ENCODE measurements at regions of chr15 and their contacts with region 1.

Region 1: DNA sequence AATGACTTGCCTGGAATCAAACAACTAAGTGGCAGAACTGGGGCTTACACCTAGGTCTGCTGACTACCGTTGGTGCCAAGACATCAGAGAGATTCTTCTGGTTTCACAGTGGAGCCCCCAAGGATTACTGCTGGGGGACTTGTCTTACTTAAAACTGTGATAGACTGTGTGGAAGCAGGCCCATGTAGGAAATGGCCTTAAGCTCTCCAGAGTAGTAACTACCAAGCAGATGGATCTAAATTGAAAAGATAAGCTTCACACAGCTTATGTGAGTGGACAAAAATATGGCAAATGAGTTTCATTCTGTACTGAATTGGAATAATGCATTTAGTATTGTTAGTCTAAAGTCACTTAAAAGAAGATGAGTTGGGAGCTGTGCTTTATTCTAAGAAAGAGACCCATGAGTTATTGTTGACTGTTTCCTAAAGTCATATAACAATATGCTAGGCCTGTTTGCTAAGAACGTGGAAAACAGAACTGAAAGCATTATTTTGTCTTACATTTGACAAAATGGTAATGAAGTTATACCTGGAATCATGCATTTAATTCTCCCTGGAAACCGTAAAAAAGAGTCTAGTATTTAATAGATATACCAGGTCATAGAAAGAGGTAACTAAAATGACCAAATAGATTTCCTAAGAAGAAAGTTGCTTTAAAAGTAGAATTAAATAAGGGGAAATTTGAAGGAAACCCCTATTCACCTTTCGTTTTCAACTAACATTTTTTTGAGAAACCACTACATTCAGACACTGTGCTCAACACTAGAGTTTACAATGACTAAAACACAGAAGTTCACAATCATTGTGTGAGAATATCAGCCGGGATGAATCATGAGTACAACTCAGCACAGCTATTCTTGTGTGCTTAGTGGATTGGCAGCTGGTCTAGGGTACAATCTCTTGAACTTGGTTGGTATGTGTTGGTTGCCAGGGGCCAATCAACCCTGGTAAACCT is 13.0 kb upstream of the MAPK6 start:
- DNase-seq: no peak
- H3K4me3 Mint-ChIP-seq: peak overlapping the region; percentile 28
- H3K27ac Mint-ChIP-seq: peak overlapping the region; percentile 80
- H3K4me1 Mint-ChIP-seq: peaks cover 70% of the 10 kb centered on the region
- H3K27me3 Mint-ChIP-seq: no peaks in the 10 kb centered on the region

Region 2: DNA sequence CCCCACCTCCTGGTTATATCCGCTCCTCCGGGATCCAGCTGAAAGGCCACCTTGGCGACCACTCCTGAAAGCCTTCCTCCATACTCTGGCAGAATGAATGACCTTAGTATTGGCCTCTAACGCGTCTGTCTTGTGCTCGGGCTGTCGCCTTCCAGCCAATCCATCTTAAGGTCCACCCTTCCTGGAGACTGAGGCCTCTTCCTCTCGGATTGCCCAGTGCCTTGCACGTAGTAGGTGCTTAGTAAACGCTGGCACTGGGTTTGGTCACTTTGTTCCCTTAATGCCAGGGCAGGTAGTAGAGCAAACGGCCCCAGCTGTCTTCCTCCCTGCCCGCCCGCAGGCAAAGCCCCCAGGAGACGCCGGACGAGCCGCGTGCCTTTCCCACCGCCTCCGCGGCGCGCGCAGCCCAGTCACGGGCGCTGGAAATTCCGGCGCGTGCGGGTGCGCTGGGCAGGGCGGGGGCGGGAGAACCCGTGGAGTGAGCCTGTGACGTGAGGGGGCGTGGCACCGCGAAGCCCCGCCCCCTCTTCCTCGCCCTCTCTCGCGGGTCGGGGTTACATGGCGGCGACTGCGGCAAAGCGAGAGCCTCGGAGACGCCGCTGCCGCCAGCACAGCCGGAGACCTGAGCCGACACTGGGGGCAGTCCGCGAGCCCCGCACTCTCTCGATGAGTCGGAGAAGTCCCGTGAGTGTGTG is 12.8 kb after region 1 on chr15 and contains the start of gene MAPK6:
- intact Hi-C with region 1: loop called (anchors 1 kb)
- DNase-seq: peak; percentile 91
- H3K4me3 Mint-ChIP-seq: peak within 1 kb of the TSS; percentile 98
- H3K27ac Mint-ChIP-seq: peak within 1 kb of the TSS; percentile 99
- H3K4me1 Mint-ChIP-seq: peaks cover 46% of the 10 kb centered on the region
- H3K27me3 Mint-ChIP-seq: peaks cover 7% of the 10 kb centered on the region
- total RNA-seq, gene MAPK6: 57.3 and 57.9 TPM in 2 replicates

Region 3: DNA sequence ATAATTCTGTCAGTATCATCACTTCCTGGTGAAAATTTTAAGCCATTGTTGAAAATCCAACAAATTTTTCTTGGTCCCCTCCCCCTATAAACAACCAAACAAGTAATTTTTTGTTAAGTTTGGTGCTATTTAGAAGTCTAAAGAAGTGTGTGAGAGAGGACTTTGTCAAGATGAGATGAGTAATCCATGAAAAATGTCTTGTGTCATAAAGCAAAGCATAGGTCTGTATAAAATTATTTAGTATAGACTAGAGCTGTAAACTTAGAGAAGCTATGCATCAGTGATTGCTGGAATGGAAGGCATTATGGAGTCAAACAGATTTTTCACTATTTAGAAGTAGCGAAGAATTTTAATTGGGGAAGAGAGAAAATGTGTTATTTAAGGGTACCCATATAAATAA is 44.4 kb after region 1 on chr15:
- intact Hi-C with region 1: loop called (anchors 1 kb)
- DNase-seq: no peak
- H3K4me3 Mint-ChIP-seq: no peak overlapping the region
- H3K27ac Mint-ChIP-seq: no peak overlapping the region
- H3K4me1 Mint-ChIP-seq: peaks cover 16% of the 10 kb centered on the region
- H3K27me3 Mint-ChIP-seq: no peaks in the 10 kb centered on the region

Region 4: GRCh38 chr15:52179278-52180195 is 173.5 kb after region 1 on chr15:
- intact Hi-C with region 1: loop called (anchors 5 kb)
- DNase-seq: peak; percentile 87
- H3K4me3 Mint-ChIP-seq: peak overlapping the region; percentile 90
- H3K27ac Mint-ChIP-seq: peak overlapping the region; percentile 94
- H3K4me1 Mint-ChIP-seq: peaks cover 37% of the 10 kb centered on the region
- H3K27me3 Mint-ChIP-seq: no peaks in the 10 kb centered on the region

Region 5: GRCh38 chr15:52261498-52262242 is 255.6 kb after region 1 on chr15:
- intact Hi-C with region 1: loop called (anchors 1 kb)
- DNase-seq: peak; percentile 63
- H3K4me3 Mint-ChIP-seq: peak overlapping the region; percentile 68
- H3K27ac Mint-ChIP-seq: peak overlapping the region; percentile 90
- H3K4me1 Mint-ChIP-seq: peaks cover 44% of the 10 kb centered on the region
- H3K27me3 Mint-ChIP-seq: no peaks in the 10 kb centered on the region

Measured in activated T-helper 1 cell treated with anti-CD3 and anti-CD28 coated beads, Interleukin-12 subunit alpha, Interleukin-12 subunit beta, Interleukin-2, Interleukin-4 antibody, amounts not matched to agents 30 ng/mL and 10 ng/mL and 1 ng/mL, durations not matched to agents 14 hours and 24 hours and 36 hours (primary cell).